ENCODE measurements at regions of chr17 and their contacts with region 1.

Region 1: DNA sequence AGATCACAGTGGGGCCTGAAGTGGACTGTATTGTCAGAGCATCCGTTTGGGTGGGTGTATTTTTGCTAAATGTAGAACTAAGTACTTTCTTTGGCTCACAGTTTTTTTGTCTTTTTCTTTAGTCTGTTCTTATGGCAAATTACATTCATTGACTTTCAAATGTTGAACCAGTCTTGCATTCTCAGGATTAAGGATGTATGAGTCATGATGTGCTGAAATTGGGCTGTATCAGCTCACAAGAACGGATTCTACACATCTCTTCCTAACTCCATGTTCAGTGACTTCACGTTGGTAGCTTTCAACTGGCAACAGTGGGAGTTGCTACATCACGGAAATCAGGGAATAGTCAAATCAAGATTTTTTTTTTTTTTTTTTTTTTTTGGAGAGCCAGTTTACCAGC is 66.4 kb downstream of the TEX2 start:
- DNase-seq: no peak
- H3K4me3 ChIP-seq: no peak overlapping the region
- H3K27ac ChIP-seq: peak overlapping the region; percentile 47
- H3K27me3 ChIP-seq: no peaks in the 10 kb centered on the region
- CTCF ChIP-seq: no peak

Region 2: DNA sequence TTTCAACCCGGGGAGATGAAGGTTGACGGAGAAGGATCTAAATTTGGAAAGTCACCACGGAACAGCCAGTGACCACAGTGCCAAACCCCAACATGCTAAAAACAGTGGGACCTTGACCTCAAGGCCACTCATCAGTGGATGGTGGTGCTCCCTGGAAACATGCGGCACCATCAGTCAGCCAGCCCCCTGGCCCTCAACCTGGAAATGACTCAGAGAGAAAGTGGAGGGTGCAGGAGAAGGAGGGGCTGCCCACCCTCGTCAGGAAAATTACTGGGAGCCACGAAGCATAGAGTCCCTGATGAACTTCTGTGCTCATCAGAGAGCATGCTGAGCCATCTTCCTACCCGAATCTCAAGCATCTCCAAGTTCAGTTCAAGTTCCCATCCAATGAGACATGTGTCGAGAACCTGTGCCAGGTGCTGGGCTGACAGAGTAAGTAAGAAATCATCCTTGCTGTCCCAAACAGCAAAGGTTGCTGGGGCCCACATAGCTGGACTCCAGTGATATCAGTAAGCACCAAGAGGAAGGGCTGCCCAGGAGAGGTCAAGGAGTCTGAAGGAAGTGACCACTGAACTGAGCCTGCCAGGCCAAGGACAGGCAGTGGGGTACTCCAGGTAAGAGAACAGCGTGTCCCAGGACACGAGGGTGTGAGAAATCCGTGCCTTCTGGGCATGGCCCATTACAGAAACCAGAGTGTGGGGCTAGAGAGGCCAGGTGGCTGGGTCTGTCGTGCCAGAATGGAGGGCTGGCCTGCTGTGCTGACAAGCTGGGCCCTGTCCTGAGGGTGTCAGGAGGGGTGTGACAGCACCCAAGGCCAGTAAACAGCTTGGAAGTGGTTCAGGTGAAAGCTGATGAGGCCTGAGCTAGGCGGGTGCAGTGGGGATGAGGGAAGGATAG is 188.8 kb after region 1 on chr17:
- CTCF ChIA-PET with region 1: no interaction called
- POLR2A ChIA-PET with region 1: interaction called, 11 read pairs
- DNase-seq: peak; percentile 15
- H3K4me3 ChIP-seq: no peak overlapping the region
- H3K27ac ChIP-seq: no peak overlapping the region
- H3K27me3 ChIP-seq: peaks cover 13% of the 10 kb centered on the region
- CTCF ChIP-seq: no peak